ENCODE measurements at regions of chr3 and their contacts with region 1.

Region 1: GRCh38 chr3:44235604-44236484 is 5.8 kb upstream of the TOPAZ1 start:
- DNase-seq: peak in 1 of 2 experiments; percentile 61
- H3K4me3 ChIP-seq: peak overlapping the region in 1 of 4 experiments; percentile 36; a peak in 2 of 8 replicates
- H3K27ac ChIP-seq: no peak overlapping the region
- H3K4me1 ChIP-seq: no peaks in the 10 kb centered on the region; a peak in 1 of 7 replicates
- H3K27me3 ChIP-seq: no peaks in the 10 kb centered on the region
- CTCF ChIP-seq: peak; percentile 35 to 68 (median 66)
- EP300 ChIP-seq: no peak
- POLR2A ChIP-seq: no peak
- RAD21 ChIP-seq: peak; percentile 54 to 70

Region 2: DNA sequence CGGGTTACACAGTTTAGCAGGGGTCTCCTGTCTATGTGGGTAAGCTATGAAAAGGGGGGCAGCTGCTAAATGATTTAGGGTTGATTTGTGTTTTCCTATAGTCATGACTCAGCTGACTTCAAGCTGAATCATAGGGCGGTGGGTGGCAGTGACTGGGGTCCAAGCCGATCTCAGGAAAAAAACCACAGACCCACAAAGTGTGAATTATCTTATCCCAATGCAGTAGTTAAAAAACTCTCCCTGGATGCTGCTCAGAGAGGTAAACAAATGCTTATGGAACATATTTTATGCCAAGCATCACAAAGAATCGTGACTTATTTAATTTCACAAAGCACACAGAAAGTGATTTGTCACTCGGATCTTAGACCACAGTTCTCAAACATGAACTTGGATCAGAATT is 12.5 kb before region 1 on chr3:
- CTCF ChIA-PET with region 1: interaction called, 32 read pairs
- POLR2A ChIA-PET with region 1: no interaction called
- DNase-seq: no peak
- H3K4me3 ChIP-seq: no peak overlapping the region
- H3K27ac ChIP-seq: no peak overlapping the region
- H3K4me1 ChIP-seq: no peaks in the 10 kb centered on the region
- H3K27me3 ChIP-seq: no peaks in the 10 kb centered on the region
- CTCF ChIP-seq: no peak
- EP300 ChIP-seq: no peak
- POLR2A ChIP-seq: no peak
- RAD21 ChIP-seq: no peak

Region 3: DNA sequence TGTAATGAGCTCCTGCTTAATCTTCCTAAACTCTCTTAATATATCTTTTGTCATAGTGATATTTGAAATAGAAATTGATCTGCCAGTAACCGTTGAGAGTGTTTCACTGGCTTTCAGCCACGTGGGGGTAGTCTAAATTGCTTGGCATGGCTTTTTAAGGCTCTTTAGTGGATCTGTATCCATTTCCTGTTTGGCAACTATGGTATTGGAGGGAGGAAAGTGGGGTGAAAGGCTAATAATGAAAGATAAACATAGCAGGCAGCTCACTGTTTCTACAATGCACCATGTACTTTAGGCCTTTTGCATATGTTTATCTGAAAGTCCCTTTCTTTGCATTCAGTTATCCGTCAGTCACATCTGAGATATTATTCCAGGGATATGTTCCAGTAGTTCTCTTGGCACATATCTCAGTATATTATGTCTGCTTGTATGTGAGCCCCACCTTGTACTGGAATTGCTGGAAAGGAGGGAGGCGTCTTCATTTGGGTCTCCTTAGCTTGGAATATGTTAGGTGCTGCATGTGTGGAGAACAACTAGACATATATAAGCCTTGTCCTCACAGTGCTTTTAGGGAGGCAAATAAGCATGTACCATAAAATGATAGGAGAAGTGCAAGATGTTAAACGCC is 16.6 kb after region 1 on chr3:
- CTCF ChIA-PET with region 1: interaction called, 13 read pairs
- POLR2A ChIA-PET with region 1: no interaction called
- DNase-seq: no peak
- H3K4me3 ChIP-seq: no peak overlapping the region
- H3K27ac ChIP-seq: no peak overlapping the region
- H3K4me1 ChIP-seq: no peaks in the 10 kb centered on the region
- H3K27me3 ChIP-seq: no peaks in the 10 kb centered on the region
- CTCF ChIP-seq: peak in 1 of 3 experiments; percentile 19; a peak in 2 of 4 replicates
- EP300 ChIP-seq: no peak
- POLR2A ChIP-seq: no peak
- RAD21 ChIP-seq: peak; percentile 21 to 41; a peak in 3 of 4 replicates

Region 4: GRCh38 chr3:44342176-44342790 is 106.4 kb after region 1 on chr3:
- CTCF ChIA-PET with region 1: no interaction called
- POLR2A ChIA-PET with region 1: no interaction called
- DNase-seq: no peak
- H3K4me3 ChIP-seq: no peak overlapping the region
- H3K27ac ChIP-seq: no peak overlapping the region
- H3K4me1 ChIP-seq: peaks cover 0 to 4% (median 2%) of the 10 kb centered on the region in 4 experiments; a peak in 4 of 7 replicates
- H3K27me3 ChIP-seq: no peaks in the 10 kb centered on the region
- CTCF ChIP-seq: no peak
- EP300 ChIP-seq: no peak
- POLR2A ChIP-seq: no peak
- RAD21 ChIP-seq: no peak